HEK293 (cell line): ENCODE measurements at regions of chr6 and their contacts with region 1.

Region 1: DNA sequence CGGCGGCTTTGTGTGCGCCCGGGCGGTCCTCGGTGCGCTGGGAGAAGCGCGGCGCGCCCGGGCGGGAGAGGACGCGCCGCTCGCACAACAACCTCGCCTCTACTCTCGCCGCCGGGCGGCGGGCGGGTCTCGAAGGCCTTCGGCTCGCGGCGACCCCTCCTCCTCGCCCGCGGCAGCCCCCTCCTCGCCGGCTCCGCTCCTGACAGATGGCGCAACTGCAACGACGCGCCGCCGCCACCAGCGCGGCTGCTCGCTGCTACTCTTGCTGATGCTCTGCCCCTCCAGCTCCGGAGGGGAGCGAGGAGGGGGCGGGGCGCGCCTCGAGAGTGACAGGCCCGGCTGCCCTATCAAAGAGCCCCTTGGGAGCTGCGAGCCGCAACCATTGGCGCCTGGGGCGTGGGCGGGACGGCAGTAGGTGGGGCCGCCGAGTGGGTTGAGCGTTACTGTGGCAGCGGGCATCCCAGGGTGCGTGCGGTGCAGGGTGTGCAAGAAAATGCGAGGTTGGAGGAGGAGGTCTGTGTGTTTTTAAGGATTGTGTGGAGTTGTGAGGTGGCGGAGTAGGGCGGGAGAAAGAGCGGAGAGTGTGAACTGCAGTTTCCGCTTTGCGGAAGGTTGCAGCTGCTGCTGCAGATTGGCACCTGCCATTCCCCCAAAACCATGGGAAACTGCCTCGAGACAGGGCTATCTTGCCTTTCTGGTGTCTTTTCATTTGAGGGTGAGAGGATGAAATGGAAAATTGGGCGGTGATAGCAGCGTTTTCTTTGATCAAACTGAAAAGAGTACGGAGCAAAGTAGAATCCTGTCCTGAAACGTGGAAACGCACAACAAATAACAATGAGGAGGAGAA is at the start of gene FYN:
- H3K4me3 ChIP-seq: peak within 1 kb of the TSS; percentile 83
- H3K27ac ChIP-seq: peak within 1 kb of the TSS; percentile 93
- H3K4me1 ChIP-seq: peaks cover 11% of the 10 kb centered on the region
- CTCF ChIP-seq: peak; percentile 82

Region 2: GRCh38 chr6:111888928-111889695 is 15.7 kb after region 1 on chr6:
- CTCF ChIA-PET with region 1: no interaction called
- POLR2A ChIA-PET with region 1: interaction called, 10 read pairs
- H3K4me3 ChIP-seq: peak overlapping the region; percentile 21
- H3K27ac ChIP-seq: no peak overlapping the region
- H3K4me1 ChIP-seq: peaks cover 12% of the 10 kb centered on the region; the same call in 1 of the 2 replicates
- CTCF ChIP-seq: no peak